HCT116 (cell line): ENCODE measurements at regions of chr6 and their contacts with region 1.

Region 1: DNA sequence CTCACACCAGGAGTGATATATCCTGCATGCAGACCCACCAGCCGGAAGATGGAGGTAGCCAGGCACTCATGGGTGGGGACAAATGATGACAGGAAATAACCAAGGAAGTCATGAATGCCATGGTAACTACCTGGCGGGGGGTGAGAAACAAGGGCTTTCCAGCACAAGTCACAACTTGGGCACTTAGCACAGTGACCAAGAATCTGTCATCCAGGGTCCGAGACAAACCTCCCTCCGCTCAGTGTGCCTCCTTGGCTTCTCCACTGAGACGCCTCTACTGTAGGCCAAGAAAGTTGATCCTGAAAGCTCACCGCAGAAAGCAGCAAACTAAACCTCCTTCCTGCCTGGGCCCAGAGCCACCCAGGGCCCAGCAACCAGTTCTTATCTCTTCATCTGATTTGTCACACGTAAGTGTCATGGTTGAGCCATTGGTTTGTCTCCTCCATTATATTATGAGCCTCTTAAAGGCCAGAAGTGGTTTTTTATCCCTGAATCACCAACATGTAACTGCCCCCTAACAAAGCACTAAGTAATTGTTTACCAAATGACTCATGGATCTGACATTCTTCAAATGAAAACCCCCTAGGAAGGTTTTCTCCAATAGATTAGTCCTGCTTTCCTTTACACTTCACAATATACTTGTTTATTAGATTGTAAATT is 84.3 kb upstream of the TAB2 start:
- DNase-seq: peak; percentile 95
- ATAC-seq: peak; percentile 84
- H3K4me3 ChIP-seq: peak overlapping the region; percentile 21 to 42
- H3K27ac ChIP-seq: peak overlapping the region; percentile 97
- H3K4me1 ChIP-seq: peaks cover 57 to 62% of the 10 kb centered on the region in 2 experiments
- H3K27me3 ChIP-seq: no peaks in the 10 kb centered on the region
- CTCF ChIP-seq: no peak
- POLR2A ChIP-seq: no peak
- RAD21 ChIP-seq: peak; percentile 32

Region 2: GRCh38 chr6:148723484-148723883 is 509.7 kb before region 1 on chr6:
- CTCF ChIA-PET with region 1: no interaction called
- POLR2A ChIA-PET with region 1: no interaction called
- RAD21 ChIA-PET with region 1: no interaction called
- intact Hi-C with region 1: no loop called
- DNase-seq: no peak
- ATAC-seq: no peak
- H3K4me3 ChIP-seq: no peak overlapping the region
- H3K27ac ChIP-seq: no peak overlapping the region
- H3K4me1 ChIP-seq: no peaks in the 10 kb centered on the region
- H3K27me3 ChIP-seq: no peaks in the 10 kb centered on the region
- CTCF ChIP-seq: no peak
- POLR2A ChIP-seq: no peak
- RAD21 ChIP-seq: no peak

Region 3: GRCh38 chr6:149200276-149200938 is 32.8 kb before region 1 on chr6:
- CTCF ChIA-PET with region 1: no interaction called
- POLR2A ChIA-PET with region 1: no interaction called
- RAD21 ChIA-PET with region 1: no interaction called
- intact Hi-C with region 1: no loop called
- DNase-seq: no peak
- ATAC-seq: no peak
- H3K4me3 ChIP-seq: no peak overlapping the region
- H3K27ac ChIP-seq: no peak overlapping the region
- H3K4me1 ChIP-seq: no peaks in the 10 kb centered on the region
- H3K27me3 ChIP-seq: no peaks in the 10 kb centered on the region
- CTCF ChIP-seq: no peak
- POLR2A ChIP-seq: no peak
- RAD21 ChIP-seq: no peak

Region 4: GRCh38 chr6:149316798-149317655 is 83.8 kb after region 1 on chr6:
- CTCF ChIA-PET with region 1: no interaction called
- POLR2A ChIA-PET with region 1: no interaction called
- RAD21 ChIA-PET with region 1: no interaction called
- intact Hi-C with region 1: loop called (anchors 5 kb)
- DNase-seq: peak; percentile 65
- ATAC-seq: peak; percentile 91
- H3K4me3 ChIP-seq: peak overlapping the region; percentile 76 to 82
- H3K27ac ChIP-seq: peak overlapping the region; percentile 95
- H3K4me1 ChIP-seq: peaks cover 21 to 28% of the 10 kb centered on the region in 2 experiments; a peak in 3 of 4 replicates
- H3K27me3 ChIP-seq: 0 out of 2 replicates have a peak, but pooled peaks cover 3% of the 10 kb centered on the region
- CTCF ChIP-seq: no peak
- POLR2A ChIP-seq: peak; percentile 23
- RAD21 ChIP-seq: no peak

Region 5: DNA sequence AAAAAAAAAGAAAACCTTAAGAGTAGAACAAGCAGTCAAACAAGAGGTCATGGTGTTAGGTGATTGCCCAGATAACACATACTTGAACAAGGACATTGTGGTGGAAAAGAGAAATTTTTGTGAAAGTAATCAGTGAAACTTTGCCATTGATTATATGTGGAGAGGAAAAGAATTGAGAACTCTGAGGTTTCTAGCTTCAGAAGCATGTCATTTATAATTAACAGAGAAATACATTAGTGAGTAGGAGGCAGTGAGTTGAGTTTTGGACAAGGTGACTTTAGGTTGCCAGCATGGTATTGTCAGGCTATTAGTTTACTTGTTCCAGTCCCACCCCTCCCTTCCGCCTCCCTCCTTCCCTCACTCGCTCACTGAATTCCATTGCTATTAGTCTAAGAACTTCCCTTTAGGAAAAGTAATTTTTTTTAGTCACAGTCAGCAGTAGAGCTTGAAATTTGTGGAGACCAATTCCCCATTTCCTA is 101.5 kb after region 1 on chr6:
- CTCF ChIA-PET with region 1: no interaction called
- POLR2A ChIA-PET with region 1: no interaction called
- RAD21 ChIA-PET with region 1: no interaction called
- intact Hi-C with region 1: loop called (anchors 5 kb)
- DNase-seq: peak; percentile 75
- ATAC-seq: peak; percentile 74
- H3K4me3 ChIP-seq: peak overlapping the region; percentile 6 to 37; a peak in 3 of 4 replicates
- H3K27ac ChIP-seq: peak overlapping the region; percentile 93; the same call in 1 of the 2 replicates
- H3K4me1 ChIP-seq: peaks cover 48 to 72% of the 10 kb centered on the region in 2 experiments
- H3K27me3 ChIP-seq: no peaks in the 10 kb centered on the region
- CTCF ChIP-seq: no peak
- POLR2A ChIP-seq: no peak
- RAD21 ChIP-seq: no peak

Region 6: GRCh38 chr6:149717588-149718458 is 484.6 kb after region 1 on chr6 and contains the start of gene LATS1:
- CTCF ChIA-PET with region 1: no interaction called
- POLR2A ChIA-PET with region 1: no interaction called
- RAD21 ChIA-PET with region 1: no interaction called
- intact Hi-C with region 1: no loop called
- DNase-seq: peak; percentile 43
- ATAC-seq: peak; percentile 85
- H3K4me3 ChIP-seq: peak within 1 kb of the TSS; percentile 79 to 82
- H3K27ac ChIP-seq: peak within 1 kb of the TSS; percentile 97
- H3K4me1 ChIP-seq: peaks cover 4 to 19% of the 10 kb centered on the region in 2 experiments; a peak in 3 of 4 replicates
- H3K27me3 ChIP-seq: no peaks in the 10 kb centered on the region
- CTCF ChIP-seq: no peak
- POLR2A ChIP-seq: peak; percentile 91
- RAD21 ChIP-seq: no peak
- total RNA-seq, gene LATS1: 21.6 TPM